Activated B cell treated with CpG ODN at 0.5 μM for 24 hours (primary cell): ENCODE measurements at regions of chr15 and their contacts with region 1.

Region 1: DNA sequence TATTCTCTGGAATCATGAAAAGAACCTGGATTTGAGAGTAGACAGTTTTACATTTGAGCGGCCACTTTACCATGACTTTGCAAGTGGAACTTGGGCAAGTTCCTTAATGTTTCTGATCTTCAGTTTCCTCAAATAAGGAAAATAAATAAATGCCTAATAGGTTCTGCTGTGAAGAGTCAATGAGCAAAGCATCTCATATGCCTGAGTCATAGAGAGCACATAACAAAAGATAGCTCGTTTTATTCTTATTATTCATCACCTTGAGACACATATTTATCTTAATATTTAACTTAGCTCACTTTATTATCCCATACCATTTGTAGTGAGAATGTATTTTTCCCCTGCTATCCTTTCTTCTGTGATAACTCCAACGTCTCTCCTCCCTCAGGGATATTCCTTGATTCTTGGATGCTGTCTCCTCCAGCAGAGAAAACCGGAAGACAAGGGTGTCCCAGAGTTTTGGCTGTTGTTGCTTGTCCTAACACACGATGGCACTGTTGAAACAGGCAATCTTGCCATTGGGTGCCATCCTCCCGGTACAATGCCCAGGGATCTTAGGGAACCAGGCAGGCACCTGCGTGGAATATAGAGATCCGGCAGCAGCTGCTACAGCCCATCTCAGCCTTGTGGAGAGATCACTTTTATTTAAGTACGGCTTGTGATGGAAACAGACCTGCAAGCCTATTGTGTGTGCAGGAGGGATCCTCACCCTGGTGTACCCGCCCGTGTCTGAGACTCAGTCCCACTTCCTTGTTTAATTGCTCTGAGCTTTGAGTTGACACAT is 33.3 kb upstream of the VPS33B start:
- DNase-seq: no peak
- ATAC-seq: peak; percentile 31
- H3K4me3 Mint-ChIP-seq: no peak overlapping the region
- H3K27ac Mint-ChIP-seq: no peak overlapping the region
- H3K4me1 Mint-ChIP-seq: no peaks in the 10 kb centered on the region
- H3K27me3 Mint-ChIP-seq: peaks cover 47% of the 10 kb centered on the region
- CTCF ChIP-seq: no peak

Region 2: GRCh38 chr15:91224755-91225380 is 169.1 kb after region 1 on chr15:
- CTCF ChIA-PET with region 1: interaction called, 16 read pairs
- POLR2A ChIA-PET with region 1: no interaction called
- intact Hi-C with region 1: loop called (anchors 1 kb)
- DNase-seq: no peak
- ATAC-seq: no peak
- H3K4me3 Mint-ChIP-seq: no peak overlapping the region
- H3K27ac Mint-ChIP-seq: no peak overlapping the region
- H3K4me1 Mint-ChIP-seq: no peaks in the 10 kb centered on the region
- H3K27me3 Mint-ChIP-seq: peaks cover 32% of the 10 kb centered on the region
- CTCF ChIP-seq: no peak

Region 3: DNA sequence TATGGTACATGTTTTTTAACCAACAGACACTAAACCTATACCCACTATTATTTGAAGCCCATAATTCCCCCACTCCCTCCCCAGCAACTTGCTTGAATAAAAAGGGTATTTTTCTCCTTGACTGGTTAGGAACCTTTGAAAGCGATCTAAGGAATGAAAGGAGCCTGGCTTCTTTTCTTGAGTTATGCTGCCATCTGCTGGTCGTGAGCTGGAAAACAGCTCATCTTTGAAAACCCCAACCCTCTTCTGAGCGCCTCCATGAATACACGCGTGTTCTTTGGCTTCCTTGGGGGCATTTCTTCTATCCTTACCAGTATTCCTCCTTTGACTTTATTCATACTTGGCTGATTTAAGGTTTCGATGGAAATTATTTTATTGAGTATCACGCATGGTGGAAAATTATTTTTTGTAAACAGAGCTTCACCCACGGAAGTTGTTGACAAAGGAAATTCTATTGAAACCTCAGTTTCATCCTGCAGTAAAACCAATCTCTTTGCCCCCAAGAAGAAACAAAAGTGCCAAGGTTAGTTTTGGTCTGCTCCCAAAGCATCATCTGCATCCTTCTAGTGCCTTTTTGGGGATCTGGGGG is 215.9 kb after region 1 on chr15:
- CTCF ChIA-PET with region 1: interaction called, 37 read pairs
- POLR2A ChIA-PET with region 1: no interaction called
- intact Hi-C with region 1: loop called (anchors 1 kb)
- DNase-seq: no peak
- ATAC-seq: peak; percentile 45
- H3K4me3 Mint-ChIP-seq: no peak overlapping the region
- H3K27ac Mint-ChIP-seq: no peak overlapping the region
- H3K4me1 Mint-ChIP-seq: peaks cover 2% of the 10 kb centered on the region
- H3K27me3 Mint-ChIP-seq: peaks cover 18% of the 10 kb centered on the region
- CTCF ChIP-seq: peak; percentile 78